Heart left ventricle (tissue), 16 donors: ENCODE measurements at regions of chr9 and their contacts with region 1.

Region 1: DNA sequence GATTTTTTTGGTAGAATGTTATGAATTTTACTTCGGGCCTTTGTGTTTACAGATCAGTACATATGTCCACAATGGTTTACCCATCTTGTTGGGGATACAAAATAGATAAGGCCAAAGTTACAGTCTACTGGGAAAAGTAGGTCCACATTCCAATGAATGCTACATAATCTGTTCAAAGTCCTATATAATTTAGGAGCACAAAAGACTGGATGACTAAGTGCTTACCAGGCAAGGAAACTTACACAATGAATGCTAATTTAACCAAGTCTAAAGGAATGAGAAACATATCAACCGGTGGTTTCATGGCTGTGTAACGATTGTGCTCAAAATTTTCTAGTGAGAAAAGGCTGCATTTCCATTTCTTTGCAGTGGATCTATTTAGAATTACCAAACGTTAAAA is 97.4 kb upstream of the TRPM3 start:
- DNase-seq: no peak
- ATAC-seq: no peak
- H3K4me3 ChIP-seq: no peak overlapping the region
- H3K27ac ChIP-seq: no peak overlapping the region
- H3K4me1 ChIP-seq: no peaks in the 10 kb centered on the region
- H3K27me3 ChIP-seq: no peaks in the 10 kb centered on the region
- CTCF ChIP-seq: no peak
- POLR2A ChIP-seq: no peak

Region 2: GRCh38 chr9:71268871-71269635 is 50.3 kb after region 1 on chr9:
- intact Hi-C with region 1: loop called in 1 of 10 experiments (anchors 10 kb)
- DNase-seq: no peak
- ATAC-seq: no peak
- H3K4me3 ChIP-seq: no peak overlapping the region
- H3K27ac ChIP-seq: no peak overlapping the region
- H3K4me1 ChIP-seq: no peaks in the 10 kb centered on the region
- H3K27me3 ChIP-seq: peaks cover 0 to 7% (median 0%) of the 10 kb centered on the region in 9 donors
- CTCF ChIP-seq: no peak
- POLR2A ChIP-seq: no peak